ENCODE measurements at regions of chr2 and their contacts with region 1.

Region 1: GRCh38 chr2:201971531-201972228 is 62.0 kb upstream of the FZD7 start:
- DNase-seq: no peak
- ATAC-seq: no peak
- H3K4me3 Mint-ChIP-seq: peak overlapping the region; percentile 57
- H3K27ac Mint-ChIP-seq: peak overlapping the region; percentile 98
- H3K4me1 Mint-ChIP-seq: peaks cover 90% of the 10 kb centered on the region
- H3K27me3 Mint-ChIP-seq: no peaks in the 10 kb centered on the region
- CTCF ChIP-seq: no peak

Region 2: GRCh38 chr2:201996006-201996405 is 24.3 kb after region 1 on chr2:
- CTCF ChIA-PET with region 1: interaction called, 9 read pairs
- POLR2A ChIA-PET with region 1: interaction called, 12 read pairs
- DNase-seq: peak; percentile 84
- ATAC-seq: peak; percentile 91
- H3K4me3 Mint-ChIP-seq: peak overlapping the region; percentile 31
- H3K27ac Mint-ChIP-seq: peak overlapping the region; percentile 97
- H3K4me1 Mint-ChIP-seq: peaks cover 72% of the 10 kb centered on the region
- H3K27me3 Mint-ChIP-seq: peaks cover 29% of the 10 kb centered on the region
- CTCF ChIP-seq: no peak

Region 3: GRCh38 chr2:202030691-202031090 is 59.0 kb after region 1 on chr2:
- CTCF ChIA-PET with region 1: interaction called, 4 read pairs
- POLR2A ChIA-PET with region 1: interaction called, 19 read pairs
- DNase-seq: no peak
- ATAC-seq: no peak
- H3K4me3 Mint-ChIP-seq: no peak overlapping the region; the same call in 1 of the 2 replicates
- H3K27ac Mint-ChIP-seq: peak overlapping the region; percentile 23
- H3K4me1 Mint-ChIP-seq: peaks cover 50% of the 10 kb centered on the region
- H3K27me3 Mint-ChIP-seq: peaks cover 45% of the 10 kb centered on the region
- CTCF ChIP-seq: no peak